Astrocyte of the cerebellum (primary cell): ENCODE measurements at regions of chr12 and their contacts with region 1.

Region 1: DNA sequence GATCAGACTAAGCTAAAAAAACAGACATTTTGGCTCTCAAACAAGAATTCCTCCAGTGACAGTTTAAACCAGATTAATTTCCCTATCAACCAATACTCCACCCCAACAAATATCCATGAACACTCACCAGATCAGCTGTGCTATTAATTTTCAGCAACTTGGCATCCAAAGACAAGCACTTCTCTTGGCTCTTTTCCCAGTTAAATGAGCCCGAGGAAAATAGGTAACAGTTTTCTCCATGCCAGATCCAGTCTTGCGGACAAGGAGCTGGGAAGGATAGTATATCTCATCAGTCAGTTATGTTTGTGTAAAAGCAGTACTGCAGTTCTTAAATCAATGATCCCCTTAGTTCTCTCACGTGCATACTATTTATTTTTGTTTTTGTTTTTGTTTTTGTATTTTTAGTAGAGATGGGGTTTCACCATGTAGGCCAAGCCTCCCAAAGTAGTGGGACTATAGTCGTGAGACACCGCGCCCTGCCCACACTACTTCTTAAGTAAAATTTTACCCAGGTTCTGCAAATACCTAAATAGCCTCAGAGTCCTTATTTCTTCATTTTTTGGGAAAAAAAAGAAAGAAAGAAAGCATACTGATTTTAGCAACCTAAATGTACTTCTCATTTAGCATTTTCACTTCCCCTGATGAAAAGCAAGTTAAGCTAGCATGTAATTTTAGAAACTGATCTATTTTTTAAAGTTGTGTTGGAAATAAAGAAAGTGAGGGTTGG is 11.1 kb downstream of the OLR1 start:
- DNase-seq: no peak
- H3K4me3 ChIP-seq: no peak overlapping the region
- CTCF ChIP-seq: no peak

Region 2: GRCh38 chr12:10121278-10121677 is 39.5 kb before region 1 on chr12:
- in situ Hi-C with region 1: no loop called
- DNase-seq: no peak
- H3K4me3 ChIP-seq: no peak overlapping the region
- CTCF ChIP-seq: no peak

Region 3: DNA sequence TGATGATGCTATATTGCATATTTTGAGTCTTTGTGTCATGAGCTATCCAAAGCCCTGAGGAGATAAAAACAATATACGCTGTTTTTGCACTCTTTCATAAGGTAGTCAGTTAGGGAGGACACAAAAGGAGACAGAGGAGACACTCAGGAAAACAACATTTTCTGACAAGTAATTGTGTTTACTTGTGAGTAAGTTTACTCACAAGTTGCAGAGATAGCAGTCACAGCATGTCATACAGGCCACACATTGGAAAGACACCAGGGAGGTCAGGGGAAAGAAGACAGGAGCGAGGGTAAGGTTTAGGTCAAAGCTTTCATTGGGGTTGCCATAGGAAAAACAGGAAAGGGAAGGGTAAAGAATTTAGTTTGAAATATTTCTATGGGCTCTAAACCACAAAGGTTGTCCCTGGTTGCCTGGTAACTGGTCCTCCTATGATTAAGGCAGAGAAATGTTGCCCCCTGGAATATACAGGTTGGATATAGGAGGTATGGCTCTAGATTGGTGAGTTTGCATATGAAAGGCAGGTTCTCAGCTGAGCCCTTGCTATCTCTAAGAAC is 44.5 kb after region 1 on chr12:
- in situ Hi-C with region 1: no loop called
- DNase-seq: no peak
- H3K4me3 ChIP-seq: no peak overlapping the region
- CTCF ChIP-seq: no peak

Region 4: DNA sequence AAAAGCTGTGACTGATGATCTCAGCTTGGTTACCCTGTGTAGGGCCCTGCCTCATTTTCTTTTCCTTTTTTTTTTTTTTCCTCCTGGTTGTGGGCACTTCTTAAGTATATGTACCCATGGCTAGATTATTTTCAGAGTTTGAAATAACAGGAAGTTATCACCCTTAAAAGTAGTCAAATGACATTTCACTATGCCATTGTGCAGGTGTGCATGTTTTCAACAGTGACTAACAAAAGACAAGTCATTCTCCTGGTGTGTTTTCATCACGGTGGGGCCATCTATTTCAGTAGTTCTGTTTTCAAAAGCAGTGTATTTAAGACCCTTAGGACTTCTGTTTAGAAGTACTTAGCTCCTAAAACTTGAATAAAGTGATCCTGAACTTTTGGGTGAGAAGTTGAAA is 66.8 kb after region 1 on chr12:
- in situ Hi-C with region 1: loop called (anchors 5 kb)
- DNase-seq: no peak
- H3K4me3 ChIP-seq: no peak overlapping the region
- CTCF ChIP-seq: no peak